Heart left ventricle (tissue), 16 donors: ENCODE measurements at regions of chr18 and their contacts with region 1.

Region 1: GRCh38 chr18:21230436-21230835 is 11.6 kb upstream of the GREB1L start:
- DNase-seq: no peak
- ATAC-seq: no peak
- H3K4me3 ChIP-seq: no peak overlapping the region
- H3K27ac ChIP-seq: no peak overlapping the region
- H3K4me1 ChIP-seq: no peaks in the 10 kb centered on the region
- H3K27me3 ChIP-seq: no peaks in the 10 kb centered on the region
- CTCF ChIP-seq: no peak
- POLR2A ChIP-seq: no peak

Region 2: GRCh38 chr18:21134898-21135297 is 95.5 kb before region 1 on chr18:
- intact Hi-C with region 1: no loop called
- DNase-seq: no peak
- ATAC-seq: peak in 2 of 4 donors; percentile 51 to 54
- H3K4me3 ChIP-seq: no peak overlapping the region
- H3K27ac ChIP-seq: no peak overlapping the region
- H3K4me1 ChIP-seq: peaks cover 0 to 8% (median 0%) of the 10 kb centered on the region in 12 donors
- H3K27me3 ChIP-seq: no peaks in the 10 kb centered on the region
- CTCF ChIP-seq: peak in 11 of 12 donors; percentile 17 to 58 (median 38)
- POLR2A ChIP-seq: no peak

Region 3: GRCh38 chr18:21439446-21439846 is 209.0 kb after region 1 on chr18:
- intact Hi-C with region 1: loop called in 2 of 10 experiments (anchors 10 kb)
- DNase-seq: no peak
- ATAC-seq: no peak
- H3K4me3 ChIP-seq: no peak overlapping the region
- H3K27ac ChIP-seq: no peak overlapping the region
- H3K4me1 ChIP-seq: no peaks in the 10 kb centered on the region
- H3K27me3 ChIP-seq: no peaks in the 10 kb centered on the region
- CTCF ChIP-seq: no peak
- POLR2A ChIP-seq: no peak

Region 4: DNA sequence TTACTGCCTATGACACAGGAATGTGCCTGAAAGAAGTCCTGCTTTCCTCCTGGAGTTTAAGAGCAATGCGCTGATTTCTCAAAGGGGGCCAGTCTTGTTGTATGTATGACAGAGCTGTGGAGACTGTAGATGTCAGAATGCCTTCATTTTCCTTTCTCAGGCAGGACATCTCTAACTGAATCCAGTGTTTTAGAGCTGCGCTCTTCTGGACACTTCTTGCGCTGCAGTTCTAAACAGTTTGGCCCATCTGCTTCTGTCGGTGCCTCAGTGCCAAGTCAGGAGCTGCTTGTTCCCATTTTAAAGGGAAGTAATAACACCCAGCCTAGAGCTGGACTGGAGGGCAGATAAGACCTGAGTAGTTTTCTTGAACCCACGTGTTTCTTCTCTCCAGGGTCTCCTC is 278.6 kb after region 1 on chr18:
- intact Hi-C with region 1: loop called in 1 of 10 experiments (anchors 10 kb)
- DNase-seq: no peak
- ATAC-seq: no peak
- H3K4me3 ChIP-seq: no peak overlapping the region
- H3K27ac ChIP-seq: no peak overlapping the region
- H3K4me1 ChIP-seq: no peaks in the 10 kb centered on the region
- H3K27me3 ChIP-seq: no peaks in the 10 kb centered on the region
- CTCF ChIP-seq: no peak
- POLR2A ChIP-seq: no peak

Region 5: DNA sequence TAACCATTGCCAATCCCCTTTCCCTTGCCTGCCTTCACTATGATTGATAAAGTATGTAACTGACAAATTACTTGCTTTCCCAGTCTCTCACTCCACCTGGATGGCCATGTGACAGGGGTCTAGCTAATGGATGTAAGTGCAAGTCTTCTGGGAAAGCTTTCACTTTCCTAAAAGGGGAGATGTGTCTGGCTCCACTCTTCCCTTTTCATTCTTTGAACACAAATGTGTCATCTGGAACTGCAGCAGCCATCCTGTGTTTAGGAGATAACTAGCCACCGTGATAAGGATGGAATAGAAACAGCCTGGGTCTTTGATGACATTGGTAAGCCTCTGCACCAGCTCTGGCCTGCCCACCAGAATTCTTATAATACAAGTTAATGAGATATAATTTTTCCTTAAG is 419.9 kb after region 1 on chr18:
- intact Hi-C with region 1: no loop called
- DNase-seq: no peak
- ATAC-seq: no peak
- H3K4me3 ChIP-seq: no peak overlapping the region
- H3K27ac ChIP-seq: no peak overlapping the region
- H3K4me1 ChIP-seq: no peaks in the 10 kb centered on the region
- H3K27me3 ChIP-seq: no peaks in the 10 kb centered on the region
- CTCF ChIP-seq: no peak
- POLR2A ChIP-seq: no peak